MCF 10A (cell line): ENCODE measurements at regions of chr15 and their contacts with region 1.

Region 1: GRCh38 chr15:51861557-51862359 is 32.3 kb downstream of the TMOD3 start:
- DNase-seq: peak; percentile 64
- H3K4me3 Mint-ChIP-seq: no peak overlapping the region
- H3K27ac Mint-ChIP-seq: peak overlapping the region; percentile 67
- H3K4me1 Mint-ChIP-seq: peaks cover 61% of the 10 kb centered on the region
- H3K27me3 Mint-ChIP-seq: no peaks in the 10 kb centered on the region
- CTCF ChIP-seq: no peak

Region 2: DNA sequence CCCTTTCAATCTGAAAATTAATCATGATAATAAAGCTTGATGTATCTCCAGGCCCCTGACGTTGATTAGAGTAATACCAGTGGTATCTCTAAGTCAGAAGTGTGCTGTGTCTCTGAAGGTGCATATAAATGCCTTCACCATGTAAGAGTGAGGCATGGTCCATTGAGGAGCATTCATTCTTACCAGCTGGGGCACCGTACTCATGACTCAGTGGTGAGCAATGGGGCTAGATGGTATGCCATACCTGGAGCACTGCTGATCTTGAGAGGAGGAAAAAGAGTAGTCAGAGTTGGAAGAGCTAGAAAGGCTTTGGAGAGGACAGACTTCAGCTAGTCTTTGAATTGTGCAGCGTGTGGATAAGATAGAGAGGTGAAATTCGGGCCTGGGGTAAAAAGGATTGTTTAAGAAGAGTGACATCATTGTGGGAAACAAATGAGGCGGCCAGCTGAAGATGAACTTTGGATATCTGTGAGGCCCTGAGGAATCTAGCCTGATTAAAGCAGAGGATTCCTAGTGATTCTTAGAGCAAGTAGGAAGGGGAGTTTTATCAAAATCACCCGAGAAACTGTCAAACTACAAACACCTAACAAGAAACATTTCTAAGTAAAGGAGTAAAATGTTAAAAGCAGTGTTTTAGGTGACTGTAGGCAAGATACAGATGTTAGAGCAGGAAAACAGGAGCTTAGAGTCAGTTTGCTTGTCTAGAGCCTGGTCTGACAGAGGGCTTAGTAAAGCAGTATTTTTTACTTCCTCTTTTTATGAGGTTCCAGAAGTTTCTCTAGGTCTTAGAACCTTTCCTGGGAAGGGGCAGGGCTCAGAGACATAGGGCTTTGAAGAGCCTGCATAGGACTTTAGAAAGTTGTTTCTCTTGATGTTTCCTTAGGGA is 18.7 kb before region 1 on chr15:
- CTCF ChIA-PET with region 1: interaction called, 3 read pairs
- POLR2A ChIA-PET with region 1: interaction called, 14 read pairs
- intact Hi-C with region 1: no loop called
- DNase-seq: peak; percentile 75
- H3K4me3 Mint-ChIP-seq: peak overlapping the region; percentile 9
- H3K27ac Mint-ChIP-seq: peak overlapping the region; percentile 69
- H3K4me1 Mint-ChIP-seq: peaks cover 54% of the 10 kb centered on the region
- H3K27me3 Mint-ChIP-seq: no peaks in the 10 kb centered on the region
- CTCF ChIP-seq: no peak

Region 3: GRCh38 chr15:51849860-51850259 is 11.9 kb before region 1 on chr15:
- CTCF ChIA-PET with region 1: interaction called, 3 read pairs
- POLR2A ChIA-PET with region 1: interaction called, 20 read pairs
- intact Hi-C with region 1: no loop called
- DNase-seq: no peak
- H3K4me3 Mint-ChIP-seq: no peak overlapping the region
- H3K27ac Mint-ChIP-seq: peak overlapping the region; percentile 75
- H3K4me1 Mint-ChIP-seq: peaks cover 62% of the 10 kb centered on the region
- H3K27me3 Mint-ChIP-seq: no peaks in the 10 kb centered on the region
- CTCF ChIP-seq: no peak

Region 4: GRCh38 chr15:51874751-51875528 is 13.2 kb after region 1 on chr15:
- CTCF ChIA-PET with region 1: interaction called, 3 read pairs
- POLR2A ChIA-PET with region 1: interaction called, 27 read pairs
- intact Hi-C with region 1: loop called (anchors 1 kb)
- DNase-seq: peak; percentile 98
- H3K4me3 Mint-ChIP-seq: peak overlapping the region; percentile 68
- H3K27ac Mint-ChIP-seq: peak overlapping the region; percentile 97
- H3K4me1 Mint-ChIP-seq: peaks cover 47% of the 10 kb centered on the region
- H3K27me3 Mint-ChIP-seq: no peaks in the 10 kb centered on the region
- CTCF ChIP-seq: no peak